Naive thymus-derived CD8-positive, alpha-beta T cell (primary cell): ENCODE measurements at regions of chr12 and their contacts with region 1.

Region 1: GRCh38 chr12:8078398-8078797 is 3.7 kb upstream of the NECAP1 start:
- DNase-seq: peak; percentile 42 to 89 (median 68)
- ATAC-seq: peak; percentile 29 to 35
- H3K4me3 Mint-ChIP-seq: peak overlapping the region in 6 of 10 donors; percentile 15 to 36 (median 25)
- H3K27ac Mint-ChIP-seq: peak overlapping the region; percentile 84 to 100 (median 96)
- H3K4me1 Mint-ChIP-seq: peaks cover 16 to 59% (median 42%) of the 10 kb centered on the region in 4 donors
- H3K27me3 Mint-ChIP-seq: peaks cover 0 to under 1% (median 0%) of the 10 kb centered on the region in 5 donors

Region 2: GRCh38 chr12:7853557-7853956 is 224.8 kb before region 1 on chr12:
- POLR2A ChIA-PET with region 1: no interaction called
- DNase-seq: no peak
- ATAC-seq: no peak
- H3K4me3 Mint-ChIP-seq: no peak overlapping the region
- H3K27ac Mint-ChIP-seq: no peak overlapping the region
- H3K4me1 Mint-ChIP-seq: no peaks in the 10 kb centered on the region
- H3K27me3 Mint-ChIP-seq: peaks cover 5 to 26% (median 15%) of the 10 kb centered on the region in 5 donors

Region 3: GRCh38 chr12:7915559-7916403 is 162.6 kb before region 1 on chr12:
- POLR2A ChIA-PET with region 1: no interaction called
- DNase-seq: peak in 1 of 10 donors; percentile 5
- ATAC-seq: peak; percentile 32 to 48
- H3K4me3 Mint-ChIP-seq: peak overlapping the region in 3 of 10 donors; percentile 3 to 57 (median 39)
- H3K27ac Mint-ChIP-seq: peak overlapping the region in 3 of 10 donors; percentile 20 to 49 (median 36)
- H3K4me1 Mint-ChIP-seq: peaks cover 3 to 28% (median 21%) of the 10 kb centered on the region in 4 donors
- H3K27me3 Mint-ChIP-seq: no peaks in the 10 kb centered on the region

Region 4: DNA sequence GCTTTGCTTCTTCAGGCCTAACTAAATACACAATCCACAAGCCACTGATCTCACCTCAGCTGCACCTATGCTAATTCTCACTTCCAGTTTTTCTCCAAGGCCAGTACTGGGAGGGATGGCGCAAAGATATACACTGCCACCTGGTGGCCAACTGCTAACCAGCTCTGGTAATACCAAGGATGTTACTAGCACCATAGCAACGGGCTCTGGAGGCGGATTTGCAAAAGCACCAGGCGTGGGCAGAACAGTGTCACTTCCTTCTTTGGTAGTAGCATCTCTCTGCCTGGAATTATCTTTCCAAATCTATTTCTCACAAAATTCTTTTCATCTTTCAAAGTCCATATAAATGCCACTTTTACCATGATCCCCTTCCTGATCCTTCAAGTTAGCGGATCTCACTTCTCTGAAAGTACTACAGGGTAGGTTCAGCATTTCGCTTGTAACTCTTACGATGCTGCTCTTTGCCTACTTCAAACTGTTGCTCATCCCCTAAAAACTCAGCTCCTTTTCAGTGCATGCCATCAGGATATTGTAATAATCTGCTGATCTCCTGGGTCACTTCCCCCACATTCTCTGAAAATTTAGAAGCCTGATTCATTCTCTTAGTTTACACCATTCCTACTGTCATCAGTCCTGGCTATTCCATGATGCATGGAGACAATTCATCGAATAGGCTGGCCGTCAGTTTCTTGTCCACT is 83.0 kb before region 1 on chr12:
- POLR2A ChIA-PET with region 1: no interaction called
- DNase-seq: peak; percentile 53 to 94 (median 80)
- ATAC-seq: peak; percentile 100
- H3K4me3 Mint-ChIP-seq: no peak overlapping the region
- H3K27ac Mint-ChIP-seq: no peak overlapping the region
- H3K4me1 Mint-ChIP-seq: peaks cover 3 to 13% (median 9%) of the 10 kb centered on the region in 4 donors
- H3K27me3 Mint-ChIP-seq: no peaks in the 10 kb centered on the region

Region 5: GRCh38 chr12:8018666-8019581 is 59.5 kb before region 1 on chr12:
- POLR2A ChIA-PET with region 1: no interaction called
- DNase-seq: peak in 6 of 10 donors; percentile 18 to 71 (median 36)
- ATAC-seq: peak; percentile 87 to 93
- H3K4me3 Mint-ChIP-seq: peak overlapping the region; percentile 64 to 87 (median 77)
- H3K27ac Mint-ChIP-seq: peak overlapping the region in 4 of 10 donors; percentile 41 to 83 (median 68)
- H3K4me1 Mint-ChIP-seq: peaks cover 1 to 10% (median 7%) of the 10 kb centered on the region in 4 donors
- H3K27me3 Mint-ChIP-seq: peaks cover 11 to 24% (median 18%) of the 10 kb centered on the region in 5 donors

Region 6: DNA sequence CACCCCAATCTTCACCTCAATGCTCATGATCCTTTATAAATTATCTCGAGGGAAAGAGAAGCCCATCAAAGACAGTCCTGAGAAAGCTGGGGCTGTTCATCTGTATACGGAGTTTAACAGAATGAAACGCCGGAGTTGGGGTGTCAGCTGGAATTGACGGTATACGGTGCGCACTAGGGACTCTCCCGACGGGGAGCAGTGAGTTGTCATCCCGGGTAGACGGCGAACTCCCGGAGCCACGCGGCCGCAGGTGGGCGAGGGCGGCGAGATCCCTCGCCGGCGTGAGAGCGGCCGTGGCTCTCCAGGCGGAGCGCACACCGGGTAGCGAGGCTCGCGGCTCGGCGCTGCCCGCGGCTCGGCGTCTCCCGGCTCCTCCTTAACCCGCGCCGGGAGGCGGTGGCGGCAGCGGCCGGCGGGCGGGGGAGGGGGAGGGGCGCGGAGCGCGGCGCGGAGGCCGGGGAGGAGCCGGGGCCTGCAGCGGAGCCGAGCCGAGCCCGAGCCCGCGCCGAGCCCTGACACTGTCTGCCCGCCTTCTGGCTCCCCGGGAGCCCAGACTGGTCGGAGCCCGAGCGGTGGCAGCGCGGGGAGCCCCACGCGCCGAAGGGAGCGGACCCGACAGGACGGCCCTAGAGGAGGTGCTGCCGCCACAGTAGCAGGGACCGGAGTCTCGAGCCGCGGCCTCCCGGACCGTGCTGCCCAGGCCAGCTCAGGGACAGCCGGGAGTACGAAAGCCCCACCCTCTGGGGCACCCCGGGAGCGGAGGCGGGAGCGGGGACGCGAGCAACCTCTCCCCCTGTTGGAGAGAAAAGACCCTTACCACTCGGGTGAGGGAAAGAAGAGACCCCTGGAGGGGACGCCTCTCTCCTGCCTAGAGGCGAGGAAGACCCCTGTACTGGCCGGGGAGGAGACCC is 45.9 kb before region 1 on chr12 and contains the start of gene FOXJ2:
- POLR2A ChIA-PET with region 1: interaction called, 18 read pairs
- DNase-seq: peak; percentile 63 to 86 (median 78)
- ATAC-seq: peak; percentile 82 to 87
- H3K4me3 Mint-ChIP-seq: peak within 1 kb of the TSS; percentile 86 to 94 (median 90)
- H3K27ac Mint-ChIP-seq: peak within 1 kb of the TSS; percentile 83 to 95 (median 94)
- H3K4me1 Mint-ChIP-seq: peaks cover 35 to 57% (median 53%) of the 10 kb centered on the region in 4 donors
- H3K27me3 Mint-ChIP-seq: no peaks in the 10 kb centered on the region
- polyA plus RNA-seq, gene FOXJ2: 6.7 to 14.4 (median 9.7) TPM

Region 7: DNA sequence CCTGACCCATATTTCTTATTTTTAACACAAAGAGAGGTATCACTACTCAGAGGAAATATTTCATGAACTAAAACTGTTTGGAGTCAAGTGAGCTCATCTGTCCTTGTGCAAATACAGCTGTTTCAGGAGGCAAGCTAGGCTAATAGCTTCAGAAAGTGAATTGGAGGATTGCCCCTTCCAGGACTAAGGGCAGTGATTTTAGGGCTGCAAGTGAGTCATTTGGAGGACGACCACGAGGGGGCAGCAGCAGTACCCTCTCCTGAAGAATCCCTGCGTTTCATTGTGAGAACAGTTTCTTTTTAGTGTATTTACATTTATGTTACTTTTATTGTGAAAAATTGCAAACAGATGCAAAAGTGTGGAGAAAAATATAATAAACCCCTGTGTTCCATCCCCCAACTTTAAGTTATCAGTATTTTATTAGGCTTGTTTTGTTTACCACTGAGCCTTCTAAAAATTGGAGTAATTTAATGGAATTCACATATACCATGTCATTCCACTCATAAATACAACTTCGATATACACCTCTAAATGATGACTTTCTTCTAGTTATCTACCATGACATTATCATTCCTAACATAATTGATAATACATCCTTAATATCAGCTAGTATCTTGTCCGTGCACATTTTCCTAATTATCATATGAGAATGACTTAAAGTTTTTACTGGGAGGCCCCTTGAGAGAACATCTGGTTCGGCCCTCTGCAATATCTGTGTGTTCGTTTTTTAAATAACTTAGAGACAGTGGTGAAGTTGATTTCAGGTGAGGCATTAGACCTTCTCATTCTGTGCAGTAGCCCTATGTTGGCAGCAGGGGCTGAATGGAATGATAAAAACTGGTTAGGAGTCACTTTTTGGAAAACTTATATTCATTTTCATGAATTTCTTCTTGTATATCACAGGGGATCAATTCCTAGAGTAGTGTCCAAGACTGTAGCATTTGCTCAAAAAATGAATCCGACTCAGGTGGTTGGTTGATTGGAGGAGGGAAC is 32.1 kb before region 1 on chr12:
- POLR2A ChIA-PET with region 1: interaction called, 17 read pairs
- DNase-seq: peak; percentile 65 to 90 (median 78)
- ATAC-seq: peak; percentile 81 to 91
- H3K4me3 Mint-ChIP-seq: no peak overlapping the region
- H3K27ac Mint-ChIP-seq: peak overlapping the region in 5 of 10 donors; percentile 8 to 77 (median 74)
- H3K4me1 Mint-ChIP-seq: peaks cover 0 to 19% (median 8%) of the 10 kb centered on the region in 4 donors
- H3K27me3 Mint-ChIP-seq: no peaks in the 10 kb centered on the region

Region 8: GRCh38 chr12:8065991-8066594 is 12.3 kb before region 1 on chr12 and contains the start of gene C3AR1:
- POLR2A ChIA-PET with region 1: interaction called, 18 read pairs
- DNase-seq: peak in 9 of 10 donors; percentile 30 to 76 (median 55)
- ATAC-seq: peak; percentile 99 to 100
- H3K4me3 Mint-ChIP-seq: peak within 1 kb of the TSS; percentile 42 to 83 (median 60)
- H3K27ac Mint-ChIP-seq: peak within 1 kb of the TSS; percentile 85 to 97 (median 94)
- H3K4me1 Mint-ChIP-seq: peaks cover 15 to 45% (median 25%) of the 10 kb centered on the region in 4 donors
- H3K27me3 Mint-ChIP-seq: no peaks in the 10 kb centered on the region
- polyA plus RNA-seq, gene C3AR1: 0.09 to 6.5 (median 2.7) TPM